ENCODE measurements at regions of chr1 and their contacts with region 1.

Region 1: DNA sequence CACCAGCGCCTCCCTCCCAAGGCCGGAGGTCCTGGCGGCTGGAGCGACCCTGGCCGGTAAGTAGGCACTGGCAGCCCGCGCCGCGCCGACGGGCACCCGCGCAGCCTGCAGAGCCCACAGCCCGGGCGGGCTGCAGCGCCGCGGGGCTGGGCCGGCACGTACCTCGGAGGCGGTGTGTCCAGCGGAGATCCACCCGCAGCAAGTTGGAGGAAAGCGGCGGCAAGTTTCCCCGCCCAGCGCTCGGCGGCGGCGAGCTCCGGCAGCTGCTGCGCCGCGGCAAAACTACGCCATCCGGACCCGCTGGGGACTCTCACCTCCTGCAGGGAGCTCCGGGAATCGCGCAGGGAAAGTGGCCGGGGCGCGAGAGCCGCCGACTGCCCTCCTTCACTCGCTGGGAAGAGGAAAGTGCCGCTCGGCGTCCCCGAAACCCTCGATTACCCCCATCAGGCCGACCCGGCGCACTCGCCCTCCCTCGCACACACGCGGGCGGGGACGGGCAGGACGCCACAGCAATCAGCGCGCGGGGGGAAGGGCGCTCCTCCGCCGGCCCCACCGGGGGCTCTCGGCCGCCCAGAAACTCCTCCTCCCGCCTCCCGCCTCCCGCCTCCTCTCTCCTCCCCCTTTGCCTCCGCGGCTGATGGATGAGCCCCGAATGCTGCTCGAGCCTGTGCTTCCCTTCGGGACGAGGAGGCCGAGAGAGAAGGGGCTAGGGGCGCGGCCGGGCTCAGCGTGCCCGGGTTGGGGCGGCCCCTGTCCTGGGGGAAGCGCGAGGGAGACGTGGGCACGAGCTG is at the start of gene TGFBR3:
- DNase-seq: peak; percentile 56
- ATAC-seq: peak; percentile 82
- H3K4me3 ChIP-seq: peak within 1 kb of the TSS; percentile 73 to 85
- H3K27ac ChIP-seq: peak within 1 kb of the TSS; percentile 85
- H3K4me1 ChIP-seq: peaks cover 14 to 39% of the 10 kb centered on the region in 2 experiments
- H3K27me3 ChIP-seq: no peaks in the 10 kb centered on the region
- CTCF ChIP-seq: peak in 2 of 3 experiments; percentile 17 to 38; a peak in 1 of 6 replicates
- POLR2A ChIP-seq: peak; percentile 49
- RAD21 ChIP-seq: peak; percentile 28; the same call in 1 of the 2 replicates
- total RNA-seq, gene TGFBR3: 7.1 TPM

Region 2: GRCh38 chr1:90964444-90965035 is 921.4 kb before region 1 on chr1:
- CTCF ChIA-PET with region 1: no interaction called
- POLR2A ChIA-PET with region 1: no interaction called
- RAD21 ChIA-PET with region 1: no interaction called
- intact Hi-C with region 1: no loop called
- DNase-seq: peak; percentile 13
- ATAC-seq: peak; percentile 61; the same call in 1 of the 2 replicates
- H3K4me3 ChIP-seq: no peak overlapping the region
- H3K27ac ChIP-seq: no peak overlapping the region
- H3K4me1 ChIP-seq: 0 out of 4 replicates have a peak, but pooled peaks cover 0 to 3% of the 10 kb centered on the region in 2 experiments
- H3K27me3 ChIP-seq: no peaks in the 10 kb centered on the region
- CTCF ChIP-seq: peak; percentile 23 to 55 (median 42); a peak in 4 of 6 replicates
- POLR2A ChIP-seq: no peak
- RAD21 ChIP-seq: peak; percentile 59

Region 3: GRCh38 chr1:91617285-91617765 is 268.6 kb before region 1 on chr1:
- CTCF ChIA-PET with region 1: no interaction called
- POLR2A ChIA-PET with region 1: no interaction called
- RAD21 ChIA-PET with region 1: no interaction called
- intact Hi-C with region 1: loop called (anchors 5 kb)
- DNase-seq: no peak
- ATAC-seq: peak; percentile 84
- H3K4me3 ChIP-seq: no peak overlapping the region
- H3K27ac ChIP-seq: no peak overlapping the region
- H3K4me1 ChIP-seq: peaks cover 5 to 20% of the 10 kb centered on the region in 2 experiments
- H3K27me3 ChIP-seq: no peaks in the 10 kb centered on the region
- CTCF ChIP-seq: peak; percentile 46 to 91 (median 48)
- POLR2A ChIP-seq: no peak
- RAD21 ChIP-seq: peak; percentile 71

Region 4: GRCh38 chr1:91732291-91733107 is 153.4 kb before region 1 on chr1:
- CTCF ChIA-PET with region 1: no interaction called
- POLR2A ChIA-PET with region 1: no interaction called
- RAD21 ChIA-PET with region 1: no interaction called
- intact Hi-C with region 1: loop called (anchors 10 kb)
- DNase-seq: peak; percentile 66
- ATAC-seq: peak; percentile 75
- H3K4me3 ChIP-seq: peak overlapping the region in 1 of 2 experiments; percentile 29; a peak in 2 of 4 replicates
- H3K27ac ChIP-seq: peak overlapping the region; percentile 62
- H3K4me1 ChIP-seq: peaks cover 55 to 63% of the 10 kb centered on the region in 2 experiments
- H3K27me3 ChIP-seq: no peaks in the 10 kb centered on the region
- CTCF ChIP-seq: no peak
- POLR2A ChIP-seq: no peak
- RAD21 ChIP-seq: peak; percentile 15; the same call in 1 of the 2 replicates